AG04450 (cell line): ENCODE measurements at regions of chr1 and their contacts with region 1.

Region 1: GRCh38 chr1:150961799-150962198 is 12.8 kb downstream of the CERS2 start:
- DNase-seq: no peak
- H3K4me3 ChIP-seq: no peak overlapping the region
- H3K27ac ChIP-seq: peak overlapping the region; percentile 21
- H3K27me3 ChIP-seq: no peaks in the 10 kb centered on the region
- CTCF ChIP-seq: no peak

Region 2: GRCh38 chr1:150363426-150364230 is 598.2 kb before region 1 on chr1 and contains the start of gene RPRD2:
- CTCF ChIA-PET with region 1: no interaction called
- POLR2A ChIA-PET with region 1: interaction called, 11 read pairs
- DNase-seq: peak; percentile 98
- H3K4me3 ChIP-seq: peak within 1 kb of the TSS; percentile 81
- H3K27ac ChIP-seq: peak within 1 kb of the TSS; percentile 98
- H3K27me3 ChIP-seq: no peaks in the 10 kb centered on the region
- CTCF ChIP-seq: no peak
- polyA plus RNA-seq, gene RPRD2: 17.1 and 19.7 TPM in 2 replicates